HAP-1 (cell line): ENCODE measurements at regions of chr22 and their contacts with region 1.

Region 1: DNA sequence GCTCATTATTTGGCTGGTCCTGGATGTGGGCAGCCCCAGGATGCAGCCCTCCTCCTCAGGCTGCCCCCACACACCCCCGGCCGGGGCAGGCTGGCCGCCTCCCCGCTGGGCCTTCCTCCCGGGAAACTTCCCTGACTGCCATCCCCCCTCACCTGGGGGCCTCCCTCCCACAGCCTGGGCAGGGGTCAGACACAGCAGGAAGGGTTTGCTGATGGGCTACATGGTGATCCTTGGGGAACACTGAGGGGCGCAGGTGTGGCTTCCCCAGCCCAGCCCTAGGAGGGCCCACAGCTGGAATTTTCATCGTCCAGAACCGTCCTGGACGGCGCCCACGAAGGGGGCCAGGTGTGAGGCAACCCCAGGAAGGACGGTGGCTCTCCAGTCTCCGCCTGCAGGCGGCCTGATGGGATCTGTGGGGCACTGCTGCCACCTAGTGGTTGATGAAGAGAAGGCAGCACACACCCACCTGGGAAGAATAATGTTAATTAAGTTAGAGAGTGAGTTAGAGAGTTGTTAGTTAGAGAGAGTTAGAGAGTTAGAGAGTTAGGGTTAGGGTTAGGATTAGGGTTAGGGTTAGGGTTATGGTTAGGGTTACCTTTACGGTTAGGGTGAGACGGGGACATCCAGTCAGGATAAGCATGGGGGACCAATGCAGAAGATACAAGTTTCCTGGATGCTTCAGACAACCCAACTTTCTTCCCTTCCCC is 75.9 kb upstream of the PRR5 start:
- DNase-seq: peak; percentile 61 to 83
- H3K4me3 ChIP-seq: no peak overlapping the region
- H3K4me1 ChIP-seq: no peaks in the 10 kb centered on the region
- H3K27me3 ChIP-seq: no peaks in the 10 kb centered on the region

Region 2: DNA sequence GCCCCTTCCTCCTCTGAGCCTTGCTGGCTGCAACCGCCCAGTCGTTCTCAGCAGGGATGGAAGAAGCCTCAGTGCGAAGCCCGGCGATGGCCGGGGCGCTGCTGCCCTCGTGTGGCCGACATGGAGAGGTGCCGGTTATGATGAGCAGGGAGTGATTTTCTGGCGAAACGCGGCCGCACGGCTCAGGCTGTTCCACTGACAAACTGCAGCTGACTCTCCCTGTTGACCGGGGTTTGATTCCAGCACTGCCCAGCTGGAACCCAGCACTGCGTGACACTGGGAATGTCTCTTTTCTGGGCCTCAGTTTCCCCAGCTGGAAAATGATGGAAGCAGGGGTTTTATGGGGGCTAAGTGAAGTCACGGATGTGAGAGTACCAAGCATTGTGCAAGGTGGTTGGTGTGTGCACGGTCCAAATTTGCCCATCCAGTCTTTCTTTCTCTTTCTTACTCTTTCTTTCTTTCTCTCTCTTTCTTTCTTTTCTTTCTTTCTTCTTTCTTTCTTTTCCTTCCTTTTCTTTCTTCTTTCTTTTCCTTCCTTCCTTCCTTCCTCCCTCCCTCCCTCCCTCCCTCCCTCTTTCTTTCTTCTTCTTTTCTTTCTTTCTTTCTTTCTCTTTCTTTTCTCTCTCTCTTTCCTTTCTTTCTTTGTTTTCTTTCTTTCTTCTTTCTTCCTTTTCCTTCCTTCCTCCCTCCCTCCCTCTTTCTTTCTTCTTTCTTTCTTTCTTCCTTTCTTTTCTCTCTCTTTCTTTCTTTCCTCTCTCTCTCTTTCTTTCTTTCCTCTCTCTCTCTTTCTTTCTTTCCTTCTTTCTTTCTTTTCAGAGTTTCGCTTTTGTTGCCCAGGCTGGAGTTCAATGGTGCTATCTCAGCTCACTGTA is 1240.1 kb before region 1 on chr22:
- in situ Hi-C with region 1: loop called (anchors 25 kb)
- DNase-seq: peak; percentile 53 to 83
- H3K4me3 ChIP-seq: no peak overlapping the region
- H3K4me1 ChIP-seq: no peaks in the 10 kb centered on the region
- H3K27me3 ChIP-seq: peaks cover 31% of the 10 kb centered on the region

Region 3: DNA sequence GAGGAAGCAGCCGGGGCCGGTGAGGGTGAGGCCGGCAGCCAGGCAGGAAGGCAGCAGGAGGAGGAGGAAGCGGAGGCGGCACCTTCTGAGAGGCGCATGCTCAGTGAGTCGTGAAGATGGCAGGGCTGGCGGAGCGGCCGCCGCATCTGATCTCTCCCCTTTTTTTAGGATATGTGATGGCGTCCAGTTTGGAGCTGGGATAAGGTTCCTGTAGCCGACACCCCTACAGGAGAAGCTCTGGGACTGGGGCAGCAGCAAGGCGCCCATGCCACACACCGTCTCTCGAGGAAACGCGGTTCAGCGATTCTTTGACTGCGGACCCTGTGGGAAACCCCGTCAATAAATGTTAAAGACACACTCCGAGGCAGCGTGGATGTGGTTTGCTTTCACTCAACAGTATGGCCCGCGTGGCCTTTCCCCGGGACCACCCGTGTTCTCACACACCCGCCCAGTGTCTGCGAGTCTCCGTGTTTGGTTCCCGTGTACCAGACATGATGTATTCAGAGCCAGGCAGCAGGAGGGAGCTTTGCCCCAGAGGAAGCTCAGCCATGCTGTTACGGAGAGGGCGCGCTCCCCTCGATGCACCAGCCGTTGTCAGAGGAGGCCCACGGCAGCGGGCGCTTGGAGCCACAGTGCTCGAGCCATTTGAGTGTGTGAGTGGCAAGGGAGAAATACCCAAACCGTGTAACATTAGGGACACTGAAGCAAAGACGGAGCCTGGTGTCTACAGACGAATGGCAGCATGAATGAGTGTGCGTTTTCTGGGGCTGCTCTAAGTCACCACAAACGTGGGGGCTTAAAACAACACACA is 629.8 kb before region 1 on chr22:
- in situ Hi-C with region 1: loop called (anchors 5 kb)
- DNase-seq: no peak
- H3K4me3 ChIP-seq: no peak overlapping the region
- H3K4me1 ChIP-seq: no peaks in the 10 kb centered on the region
- H3K27me3 ChIP-seq: no peaks in the 10 kb centered on the region

Region 4: GRCh38 chr22:44080936-44081861 is 544.9 kb before region 1 on chr22:
- in situ Hi-C with region 1: loop called (anchors 10 kb)
- DNase-seq: peak; percentile 77 to 87
- H3K4me3 ChIP-seq: no peak overlapping the region
- H3K4me1 ChIP-seq: peaks cover 6% of the 10 kb centered on the region; the same call in 1 of the 2 replicates
- H3K27me3 ChIP-seq: no peaks in the 10 kb centered on the region

Region 5: GRCh38 chr22:44595841-44596341 is 30.2 kb before region 1 on chr22:
- in situ Hi-C with region 1: no loop called
- DNase-seq: no peak
- H3K4me3 ChIP-seq: no peak overlapping the region
- H3K4me1 ChIP-seq: no peaks in the 10 kb centered on the region
- H3K27me3 ChIP-seq: no peaks in the 10 kb centered on the region

Region 6: GRCh38 chr22:44765571-44766285 is 139.6 kb after region 1 on chr22:
- in situ Hi-C with region 1: no loop called
- DNase-seq: no peak
- H3K4me3 ChIP-seq: no peak overlapping the region
- H3K4me1 ChIP-seq: no peaks in the 10 kb centered on the region
- H3K27me3 ChIP-seq: no peaks in the 10 kb centered on the region